Activated T-helper 1 cell treated with anti-CD3 and anti-CD28 coated beads, Interleukin-12 subunit alpha, Interleukin-12 subunit beta, Interleukin-2, Interleukin-4 antibody, amounts not matched to agents 30 ng/mL and 10 ng/mL and 1 ng/mL, durations not matched to agents 14 hours and 24 hours and 36 hours (primary cell): ENCODE measurements at regions of chr10 and their contacts with region 1.

Region 1: GRCh38 chr10:15168781-15169554 is 475 bp upstream of the NMT2 start:
- DNase-seq: peak; percentile 84
- H3K4me3 Mint-ChIP-seq: peak overlapping the region; percentile 55
- H3K27ac Mint-ChIP-seq: peak overlapping the region; percentile 74
- H3K4me1 Mint-ChIP-seq: peaks cover 51% of the 10 kb centered on the region
- H3K27me3 Mint-ChIP-seq: peaks cover 5% of the 10 kb centered on the region

Region 2: DNA sequence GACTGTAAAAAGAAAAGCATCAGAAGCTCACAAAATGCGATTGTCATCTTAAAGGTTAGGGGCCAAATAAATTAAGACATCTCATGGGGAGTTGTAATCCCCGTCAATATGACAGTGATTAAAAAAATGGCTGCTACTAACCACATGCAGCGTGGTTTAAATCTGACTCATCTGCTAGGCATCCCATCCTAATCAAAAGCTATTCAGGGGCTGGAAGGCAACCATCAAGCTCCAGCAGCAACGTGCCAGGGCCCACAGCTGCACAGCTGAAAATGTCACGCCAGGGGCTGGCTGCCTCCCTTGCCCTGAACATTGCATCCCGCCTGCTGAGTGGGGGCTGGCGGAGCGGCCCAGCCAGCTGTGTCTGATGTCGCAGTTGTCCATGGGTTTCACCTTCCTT is 771.9 kb before region 1 on chr10:
- intact Hi-C with region 1: no loop called
- DNase-seq: no peak
- H3K4me3 Mint-ChIP-seq: no peak overlapping the region
- H3K27ac Mint-ChIP-seq: no peak overlapping the region
- H3K4me1 Mint-ChIP-seq: no peaks in the 10 kb centered on the region
- H3K27me3 Mint-ChIP-seq: peaks cover 32% of the 10 kb centered on the region

Region 3: DNA sequence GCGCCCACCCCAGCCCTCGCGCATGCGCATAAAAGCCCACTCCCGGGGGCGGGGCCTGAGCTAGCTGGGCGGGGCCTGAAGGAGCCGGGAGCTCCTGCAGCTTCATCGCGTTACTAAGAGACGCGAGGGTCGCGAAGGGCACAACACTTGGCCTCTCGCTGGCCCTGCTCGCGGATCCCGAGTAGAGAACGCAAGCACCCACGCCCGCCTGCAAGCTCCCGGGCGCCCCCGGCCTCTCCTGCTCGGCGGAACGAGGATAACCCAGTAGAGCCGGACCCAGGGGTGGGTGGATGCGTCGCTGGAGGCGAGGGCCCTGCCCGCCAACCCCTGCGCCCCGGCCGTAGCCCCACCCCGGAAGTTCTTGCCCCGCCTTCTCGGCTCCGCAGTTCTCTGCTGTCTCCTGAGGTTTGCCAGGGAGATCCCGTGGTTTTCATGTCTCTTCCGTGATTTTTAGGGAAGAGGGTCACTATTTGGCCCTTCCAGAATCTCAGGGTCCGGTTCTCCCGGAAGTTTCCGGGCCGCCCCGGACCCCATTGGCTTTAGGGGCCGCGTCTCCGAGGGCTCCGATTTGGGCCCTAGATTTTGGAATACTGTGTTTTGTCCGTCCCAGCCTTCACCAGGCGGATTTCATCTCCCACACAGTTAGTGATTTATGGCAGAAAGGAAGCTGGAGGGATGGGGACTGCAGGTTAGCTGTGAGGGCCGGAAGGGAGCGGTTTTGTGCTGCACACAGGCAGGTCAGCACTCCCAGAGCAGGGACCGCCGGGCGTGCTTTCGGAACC is 209.5 kb before region 1 on chr10 and contains the start of gene MEIG1:
- intact Hi-C with region 1: loop called (anchors 1 kb)
- DNase-seq: peak; percentile 91
- H3K4me3 Mint-ChIP-seq: peak within 1 kb of the TSS; percentile 97
- H3K27ac Mint-ChIP-seq: peak within 1 kb of the TSS; percentile 95
- H3K4me1 Mint-ChIP-seq: peaks cover 22% of the 10 kb centered on the region
- H3K27me3 Mint-ChIP-seq: no peaks in the 10 kb centered on the region
- total RNA-seq, gene MEIG1: 0.44 TPM in 1 of 2 replicates, not detected in the other

Region 4: DNA sequence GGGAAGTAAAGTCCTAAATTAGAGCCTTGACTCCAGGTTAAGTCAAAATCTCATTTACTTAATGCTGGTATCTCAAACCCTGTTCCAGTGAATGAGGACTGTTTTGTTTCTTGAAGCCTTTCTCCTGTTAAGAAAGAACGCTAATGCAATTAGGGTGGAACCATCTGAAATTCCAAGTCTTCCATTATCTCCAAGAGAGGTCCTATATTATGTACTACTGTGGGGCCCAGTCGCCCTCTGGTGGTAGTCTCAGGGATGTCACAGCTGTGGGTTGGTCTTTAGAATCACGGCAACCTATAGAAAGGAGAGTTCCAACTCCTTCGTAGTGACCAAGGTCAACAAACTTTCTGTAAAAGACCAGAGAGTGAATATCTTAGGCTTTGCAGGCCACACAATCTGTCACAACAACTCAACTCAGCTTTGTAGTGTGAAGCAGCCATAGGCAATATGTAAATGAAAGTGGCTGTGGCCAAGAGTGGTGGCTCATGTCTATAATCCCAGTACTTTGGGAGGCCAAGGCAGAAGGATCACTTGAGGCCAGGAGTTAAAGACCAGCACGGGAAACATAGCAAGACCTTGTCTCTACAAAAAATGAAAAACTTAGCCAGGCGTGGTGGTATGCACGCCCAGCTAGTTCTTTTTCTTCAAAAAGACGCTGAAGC is 62.5 kb before region 1 on chr10:
- intact Hi-C with region 1: loop called (anchors 2 kb)
- DNase-seq: peak; percentile 47
- H3K4me3 Mint-ChIP-seq: no peak overlapping the region
- H3K27ac Mint-ChIP-seq: no peak overlapping the region
- H3K4me1 Mint-ChIP-seq: peaks cover 7% of the 10 kb centered on the region
- H3K27me3 Mint-ChIP-seq: no peaks in the 10 kb centered on the region

Region 5: GRCh38 chr10:15141136-15142054 is 27.6 kb before region 1 on chr10:
- intact Hi-C with region 1: loop called (anchors 1 kb)
- DNase-seq: no peak
- H3K4me3 Mint-ChIP-seq: peak overlapping the region; percentile 29
- H3K27ac Mint-ChIP-seq: no peak overlapping the region
- H3K4me1 Mint-ChIP-seq: peaks cover 16% of the 10 kb centered on the region
- H3K27me3 Mint-ChIP-seq: no peaks in the 10 kb centered on the region

Region 6: GRCh38 chr10:15209827-15210509 is 41.0 kb after region 1 on chr10:
- intact Hi-C with region 1: loop called (anchors 1 kb)
- DNase-seq: peak; percentile 64
- H3K4me3 Mint-ChIP-seq: no peak overlapping the region
- H3K27ac Mint-ChIP-seq: no peak overlapping the region
- H3K4me1 Mint-ChIP-seq: peaks cover 51% of the 10 kb centered on the region
- H3K27me3 Mint-ChIP-seq: no peaks in the 10 kb centered on the region